CD8-positive, alpha-beta T cell (primary cell): ENCODE measurements at regions of chr21 and their contacts with region 1.

Region 1: DNA sequence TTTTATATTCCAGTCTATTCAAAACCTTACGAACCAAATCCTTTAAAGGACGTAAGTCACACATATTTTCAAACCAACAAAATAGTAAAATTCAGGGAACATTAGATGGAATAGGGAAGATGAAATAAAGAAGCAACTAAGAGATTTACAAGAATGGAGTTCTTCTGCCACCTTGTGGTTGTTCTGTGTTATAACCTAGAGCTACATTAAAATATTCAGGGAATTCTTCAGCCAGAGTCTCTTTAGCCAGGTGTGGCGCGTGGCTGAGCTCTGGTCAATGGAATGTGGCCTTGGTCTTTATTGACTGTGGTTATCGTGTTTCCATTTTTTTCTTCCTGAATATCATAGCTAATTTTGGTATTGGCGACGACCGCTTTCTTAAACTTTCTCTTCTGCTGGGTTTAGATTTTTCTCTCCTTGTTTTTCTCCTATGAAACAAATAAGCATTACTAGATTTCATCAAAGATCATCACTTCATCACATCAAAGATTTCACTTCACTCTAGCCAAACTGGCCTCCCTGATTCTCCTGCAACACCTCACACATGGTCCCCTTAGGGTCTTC is 221.3 kb downstream of the MRPL39 start:
- DNase-seq: peak in 2 of 9 experiments; percentile 52 to 64
- ATAC-seq: no peak
- H3K4me3 ChIP-seq: no peak overlapping the region
- H3K4me3 Mint-ChIP-seq: no peak overlapping the region
- H3K27ac ChIP-seq: no peak overlapping the region
- H3K27ac Mint-ChIP-seq: no peak overlapping the region
- H3K4me1 ChIP-seq: no peaks in the 10 kb centered on the region
- H3K4me1 Mint-ChIP-seq: peaks cover 4% of the 10 kb centered on the region
- H3K27me3 ChIP-seq: no peaks in the 10 kb centered on the region
- H3K27me3 Mint-ChIP-seq: no peaks in the 10 kb centered on the region
- CTCF ChIP-seq: peak; percentile 96

Region 2: DNA sequence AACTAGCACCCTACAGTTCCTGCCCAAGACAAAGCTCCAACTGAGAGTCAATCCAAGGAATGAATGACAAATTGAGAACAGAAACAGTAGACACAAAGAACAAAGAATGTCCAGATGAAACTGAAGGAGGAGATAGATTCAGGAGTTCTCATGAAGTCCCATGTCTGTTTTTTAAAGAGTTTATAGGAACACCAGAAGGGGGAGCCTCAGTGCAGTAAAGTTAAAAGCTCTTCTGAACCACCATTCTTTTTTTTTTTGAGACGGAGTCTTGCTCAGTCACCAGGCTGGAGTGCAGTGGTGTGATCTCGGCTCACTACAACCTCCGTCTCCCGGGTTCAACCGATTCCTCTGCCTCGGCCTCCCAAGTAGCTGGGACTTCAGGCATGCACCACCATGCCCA is 102.3 kb before region 1 on chr21:
- CTCF ChIA-PET with region 1: interaction called, 5 read pairs
- POLR2A ChIA-PET with region 1: no interaction called
- intact Hi-C with region 1: loop called (anchors 2 kb)
- DNase-seq: peak in 2 of 9 experiments; percentile 21 to 44
- ATAC-seq: peak; percentile 31
- H3K4me3 ChIP-seq: no peak overlapping the region
- H3K4me3 Mint-ChIP-seq: no peak overlapping the region
- H3K27ac ChIP-seq: no peak overlapping the region
- H3K27ac Mint-ChIP-seq: no peak overlapping the region
- H3K4me1 ChIP-seq: no peaks in the 10 kb centered on the region
- H3K4me1 Mint-ChIP-seq: no peaks in the 10 kb centered on the region
- H3K27me3 ChIP-seq: no peaks in the 10 kb centered on the region
- H3K27me3 Mint-ChIP-seq: peaks cover 4% of the 10 kb centered on the region
- CTCF ChIP-seq: no peak

Region 3: GRCh38 chr21:25350056-25350455 is 35.9 kb before region 1 on chr21:
- CTCF ChIA-PET with region 1: no interaction called
- POLR2A ChIA-PET with region 1: no interaction called
- intact Hi-C with region 1: no loop called
- DNase-seq: no peak
- ATAC-seq: no peak
- H3K4me3 ChIP-seq: no peak overlapping the region
- H3K4me3 Mint-ChIP-seq: no peak overlapping the region
- H3K27ac ChIP-seq: no peak overlapping the region
- H3K27ac Mint-ChIP-seq: no peak overlapping the region
- H3K4me1 ChIP-seq: no peaks in the 10 kb centered on the region
- H3K4me1 Mint-ChIP-seq: no peaks in the 10 kb centered on the region
- H3K27me3 ChIP-seq: no peaks in the 10 kb centered on the region
- H3K27me3 Mint-ChIP-seq: peaks cover 15% of the 10 kb centered on the region
- CTCF ChIP-seq: no peak